SK-N-SH (cell line): ENCODE measurements at regions of chr16 and their contacts with region 1.

Region 1: GRCh38 chr16:89749647-89750046 is 28.3 kb downstream of the ZNF276 start:
- DNase-seq: no peak
- H3K4me3 ChIP-seq: no peak overlapping the region
- H3K27ac ChIP-seq: no peak overlapping the region
- H3K4me1 ChIP-seq: no peaks in the 10 kb centered on the region; a peak in 1 of 4 replicates
- H3K27me3 ChIP-seq: no peaks in the 10 kb centered on the region
- CTCF ChIP-seq: no peak
- EP300 ChIP-seq: no peak
- RAD21 ChIP-seq: no peak

Region 2: DNA sequence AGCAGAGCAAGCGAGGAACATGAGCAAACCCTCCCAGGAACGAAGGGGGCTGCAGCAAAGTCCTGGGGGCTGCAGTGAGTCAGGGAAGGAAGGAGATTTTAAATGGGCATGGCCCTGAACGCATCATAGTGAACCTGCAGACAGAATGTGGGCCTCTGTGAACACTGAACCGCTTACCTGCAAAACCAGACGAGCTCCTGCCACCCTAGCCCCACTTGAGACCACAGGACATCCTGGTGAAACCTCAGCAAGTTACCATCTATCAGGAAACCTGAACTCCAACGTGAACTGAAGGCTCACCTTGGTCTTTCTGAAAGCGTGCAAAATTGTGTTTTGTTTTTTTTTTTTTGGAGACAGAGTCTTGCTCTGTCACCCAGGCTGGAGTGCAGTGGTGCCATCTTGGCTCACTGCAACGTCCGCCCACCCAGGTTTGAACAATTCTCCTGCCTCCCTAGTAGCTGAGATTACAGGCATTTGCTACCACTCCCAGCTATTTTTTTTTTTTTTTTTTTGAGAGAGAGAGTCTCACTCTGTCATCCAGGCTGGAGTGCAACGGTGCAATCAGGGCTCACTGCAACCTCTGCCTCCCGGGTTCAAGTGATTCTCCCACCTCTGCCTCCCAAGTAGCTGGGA is 36.0 kb after region 1 on chr16:
- CTCF ChIA-PET with region 1: interaction called, 12 read pairs
- POLR2A ChIA-PET with region 1: no interaction called
- DNase-seq: no peak
- H3K4me3 ChIP-seq: no peak overlapping the region
- H3K27ac ChIP-seq: no peak overlapping the region; a peak in 1 of 4 replicates
- H3K4me1 ChIP-seq: peaks cover 0 to 9% of the 10 kb centered on the region in 2 experiments; a peak in 1 of 4 replicates
- H3K27me3 ChIP-seq: no peaks in the 10 kb centered on the region
- CTCF ChIP-seq: no peak
- EP300 ChIP-seq: no peak
- RAD21 ChIP-seq: no peak

Region 3: DNA sequence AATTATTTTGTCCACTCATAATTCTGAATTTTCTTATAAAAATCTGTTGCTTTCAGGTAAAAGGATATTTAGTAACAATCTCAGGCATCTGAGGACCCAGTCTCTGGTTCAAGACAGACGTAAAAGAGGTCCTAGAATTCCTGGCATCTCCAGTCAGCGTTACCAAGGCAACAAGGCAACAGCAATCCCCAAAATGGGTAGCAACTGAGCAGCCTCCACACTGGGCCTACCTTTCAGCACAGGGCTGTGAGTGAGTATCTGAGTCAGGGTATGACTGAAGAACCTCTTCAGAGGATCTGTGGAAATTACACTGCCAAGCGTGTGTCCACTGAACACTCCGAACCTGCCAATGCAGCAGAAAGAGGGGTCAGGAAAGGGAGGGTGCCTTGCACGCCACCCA is 46.0 kb after region 1 on chr16:
- CTCF ChIA-PET with region 1: interaction called, 35 read pairs
- POLR2A ChIA-PET with region 1: interaction called, 3 read pairs
- DNase-seq: no peak
- H3K4me3 ChIP-seq: no peak overlapping the region
- H3K27ac ChIP-seq: no peak overlapping the region
- H3K4me1 ChIP-seq: peaks cover 0 to 23% of the 10 kb centered on the region in 2 experiments; a peak in 1 of 4 replicates
- H3K27me3 ChIP-seq: no peaks in the 10 kb centered on the region
- CTCF ChIP-seq: no peak
- EP300 ChIP-seq: no peak
- RAD21 ChIP-seq: no peak